GM10248 (cell line): ENCODE measurements at regions of chr15 and their contacts with region 1.

Region 1: DNA sequence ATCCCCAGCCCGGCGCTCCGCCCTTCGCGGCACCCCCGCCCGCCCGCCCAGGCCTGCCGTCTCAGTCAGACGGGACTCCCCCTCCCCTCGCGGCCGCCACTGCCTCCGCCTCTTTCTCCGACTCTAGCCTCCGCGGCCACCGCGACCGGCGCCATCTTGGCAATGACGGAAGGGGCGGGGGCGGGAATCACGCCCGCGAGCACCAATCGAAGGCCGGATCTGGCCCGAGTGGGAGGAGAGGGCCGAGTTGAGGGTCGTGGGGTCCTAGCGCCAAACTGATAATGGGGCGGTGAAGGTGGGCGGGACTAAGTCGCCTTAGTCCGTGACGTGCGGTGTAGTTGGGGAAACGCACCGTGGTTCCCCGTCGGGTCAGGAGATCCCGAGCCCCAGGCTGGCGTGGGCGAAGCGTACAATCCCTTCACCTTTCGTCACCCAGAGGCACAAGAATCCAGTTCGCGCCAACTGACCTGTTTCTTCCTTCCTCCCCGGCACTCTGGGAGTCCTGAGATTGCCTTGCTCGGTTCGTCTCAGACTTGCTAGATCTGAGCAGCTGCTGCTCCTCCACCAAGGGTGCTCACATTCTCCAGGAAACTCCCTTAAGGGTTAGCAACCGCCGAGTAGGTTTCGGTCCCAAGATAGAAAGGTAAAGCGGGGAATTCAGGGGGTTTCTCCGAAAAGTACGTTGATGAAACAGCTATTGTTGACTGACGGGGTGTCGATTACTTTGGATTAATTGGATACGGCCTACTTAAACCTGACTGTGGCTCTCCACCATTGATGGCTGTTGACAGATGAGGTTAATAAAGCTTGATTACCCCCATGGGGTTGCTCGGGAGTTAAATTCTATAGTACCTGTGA is at the start of gene DENND4A:
- DNase-seq: peak; percentile 93
- CTCF ChIP-seq: no peak

Region 2: GRCh38 chr15:65184868-65185738 is 607.3 kb before region 1 on chr15 and contains the start of gene CLPX:
- CTCF ChIA-PET with region 1: no interaction called
- POLR2A ChIA-PET with region 1: interaction called, 11 read pairs
- DNase-seq: peak; percentile 94
- CTCF ChIP-seq: no peak

Region 3: GRCh38 chr15:65761210-65761926 is 31.0 kb before region 1 on chr15:
- CTCF ChIA-PET with region 1: no interaction called
- POLR2A ChIA-PET with region 1: no interaction called
- DNase-seq: no peak
- CTCF ChIP-seq: no peak

Region 4: GRCh38 chr15:65777053-65777452 is 15.3 kb before region 1 on chr15:
- CTCF ChIA-PET with region 1: interaction called, 7 read pairs
- POLR2A ChIA-PET with region 1: interaction called, 20 read pairs
- DNase-seq: no peak
- CTCF ChIP-seq: no peak

Region 5: DNA sequence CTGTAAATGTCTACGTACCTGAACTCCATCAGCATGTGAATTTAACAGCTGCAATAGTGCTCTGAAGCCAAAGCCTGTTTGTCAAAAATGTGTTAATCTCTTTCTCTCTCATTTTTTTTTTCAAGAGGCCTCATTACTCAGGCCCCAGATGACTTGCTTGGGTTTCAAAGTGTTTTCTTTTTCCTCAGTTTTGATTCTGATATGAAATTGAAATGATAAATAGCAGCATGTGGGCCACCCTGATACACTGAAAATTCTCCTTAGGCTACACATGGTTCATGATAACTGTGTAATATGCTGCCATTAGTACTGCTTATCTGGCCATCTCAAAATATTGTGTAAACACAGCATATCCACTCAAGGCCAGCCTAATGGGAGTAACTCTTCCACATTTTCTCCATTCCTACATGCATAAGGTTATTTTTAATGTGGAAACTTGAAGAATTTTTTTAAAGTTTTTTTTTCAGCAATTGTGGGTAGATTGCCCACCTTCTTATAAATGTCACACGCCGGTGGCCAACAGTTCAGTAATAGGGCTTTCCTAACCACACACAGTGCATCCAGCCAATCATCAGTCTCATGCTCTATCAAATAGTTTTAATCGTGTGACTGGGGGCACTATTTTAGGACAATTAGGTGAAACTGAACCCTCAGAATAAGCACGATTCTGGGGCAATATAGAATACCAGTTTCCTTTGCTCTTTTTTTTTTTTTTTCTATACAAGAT is 12.8 kb after region 1 on chr15:
- CTCF ChIA-PET with region 1: interaction called, 11 read pairs
- POLR2A ChIA-PET with region 1: no interaction called
- DNase-seq: no peak
- CTCF ChIP-seq: no peak

Region 6: GRCh38 chr15:65818927-65819562 is 26.7 kb after region 1 on chr15:
- CTCF ChIA-PET with region 1: interaction called, 16 read pairs
- POLR2A ChIA-PET with region 1: interaction called, 22 read pairs
- DNase-seq: peak; percentile 71
- CTCF ChIP-seq: no peak

Region 7: DNA sequence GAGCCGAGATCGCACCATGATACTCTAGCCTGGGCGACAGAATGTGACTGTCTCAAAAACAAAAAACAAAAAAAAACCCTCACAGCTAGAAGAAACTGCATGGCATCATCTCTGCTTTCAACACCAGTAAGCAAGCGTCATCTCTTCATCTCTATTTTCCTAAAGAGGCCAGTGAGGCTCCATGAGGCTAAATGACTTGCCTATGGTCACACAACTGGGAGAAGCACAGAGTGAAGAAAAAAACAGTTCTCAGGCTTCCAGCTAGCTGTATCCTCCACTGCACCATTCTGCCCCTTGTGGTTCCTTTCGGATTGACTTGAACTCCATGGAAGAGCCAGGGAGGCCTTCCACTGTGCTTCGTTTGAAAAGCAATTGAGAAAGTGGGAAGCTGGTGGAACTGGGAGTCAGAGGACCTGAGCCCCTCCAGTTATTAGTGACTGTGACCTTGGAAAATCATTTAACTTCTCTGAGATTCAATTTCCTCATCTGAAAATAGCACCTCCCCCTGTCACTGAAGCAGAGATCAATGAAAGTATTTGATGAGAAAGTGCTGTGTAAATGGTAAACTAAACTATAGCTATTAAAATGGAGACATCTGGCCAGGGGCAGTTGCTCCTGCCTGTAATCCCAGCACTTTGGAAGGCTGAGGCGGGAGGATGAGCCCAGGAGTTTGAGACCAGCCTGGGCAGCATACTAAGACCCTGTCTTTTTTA is 31.8 kb after region 1 on chr15:
- CTCF ChIA-PET with region 1: interaction called, 16 read pairs
- POLR2A ChIA-PET with region 1: interaction called, 22 read pairs
- DNase-seq: no peak
- CTCF ChIP-seq: peak; percentile 59

Region 8: DNA sequence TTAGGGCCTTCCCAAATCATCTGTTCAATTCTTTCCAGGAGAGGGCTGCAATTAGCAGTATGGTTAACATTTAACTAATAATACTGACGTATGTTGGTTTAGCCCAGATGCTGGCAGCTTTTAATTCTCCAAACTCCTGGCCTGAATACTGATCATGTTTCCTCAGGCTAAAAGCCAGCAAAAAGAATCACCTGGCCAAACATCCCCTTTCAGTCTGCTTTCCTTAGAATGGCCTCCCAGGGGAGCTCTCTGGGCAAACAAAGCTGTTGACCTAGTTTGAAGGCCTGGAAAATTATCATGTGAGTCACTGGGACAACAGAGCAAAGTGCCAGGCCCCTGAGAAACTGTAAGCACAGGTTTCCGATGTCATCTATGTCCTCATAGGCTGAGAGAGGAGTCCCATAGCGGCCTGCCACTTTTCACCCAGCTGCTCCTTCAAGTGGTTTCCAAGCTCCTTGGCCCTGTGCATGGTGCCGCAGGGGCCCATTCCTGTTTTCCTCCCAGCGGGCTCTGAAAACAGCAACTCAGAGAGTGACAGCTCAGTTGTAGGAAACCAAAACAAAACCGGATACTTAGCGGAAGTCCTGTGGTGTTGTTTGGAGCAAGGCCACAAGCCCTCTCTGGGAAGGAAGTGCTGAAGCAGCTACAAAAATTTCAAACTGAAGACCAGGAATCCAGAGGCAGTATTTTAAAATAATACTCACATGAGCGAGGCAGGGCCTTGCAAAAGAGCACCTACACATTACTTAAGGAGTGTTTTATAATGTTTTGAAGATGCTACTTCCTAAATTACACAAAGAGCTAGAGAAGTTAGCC is 40.4 kb after region 1 on chr15:
- CTCF ChIA-PET with region 1: interaction called, 12 read pairs
- POLR2A ChIA-PET with region 1: interaction called, 3 read pairs
- DNase-seq: peak; percentile 32
- CTCF ChIP-seq: no peak